Activated T-helper 1 cell treated with anti-CD3 and anti-CD28 coated beads, Interleukin-12 subunit alpha, Interleukin-12 subunit beta, Interleukin-2, Interleukin-4 antibody, amounts not matched to agents 30 ng/mL and 10 ng/mL and 1 ng/mL, durations not matched to agents 14 hours and 24 hours and 36 hours (primary cell): ENCODE measurements at regions of chr17 and their contacts with region 1.

Region 1: GRCh38 chr17:27236717-27237315 is 57.1 kb upstream of the WSB1 start:
- DNase-seq: peak; percentile 51
- H3K4me3 Mint-ChIP-seq: no peak overlapping the region
- H3K27ac Mint-ChIP-seq: no peak overlapping the region
- H3K4me1 Mint-ChIP-seq: peaks cover 21% of the 10 kb centered on the region
- H3K27me3 Mint-ChIP-seq: peaks cover 22% of the 10 kb centered on the region

Region 2: DNA sequence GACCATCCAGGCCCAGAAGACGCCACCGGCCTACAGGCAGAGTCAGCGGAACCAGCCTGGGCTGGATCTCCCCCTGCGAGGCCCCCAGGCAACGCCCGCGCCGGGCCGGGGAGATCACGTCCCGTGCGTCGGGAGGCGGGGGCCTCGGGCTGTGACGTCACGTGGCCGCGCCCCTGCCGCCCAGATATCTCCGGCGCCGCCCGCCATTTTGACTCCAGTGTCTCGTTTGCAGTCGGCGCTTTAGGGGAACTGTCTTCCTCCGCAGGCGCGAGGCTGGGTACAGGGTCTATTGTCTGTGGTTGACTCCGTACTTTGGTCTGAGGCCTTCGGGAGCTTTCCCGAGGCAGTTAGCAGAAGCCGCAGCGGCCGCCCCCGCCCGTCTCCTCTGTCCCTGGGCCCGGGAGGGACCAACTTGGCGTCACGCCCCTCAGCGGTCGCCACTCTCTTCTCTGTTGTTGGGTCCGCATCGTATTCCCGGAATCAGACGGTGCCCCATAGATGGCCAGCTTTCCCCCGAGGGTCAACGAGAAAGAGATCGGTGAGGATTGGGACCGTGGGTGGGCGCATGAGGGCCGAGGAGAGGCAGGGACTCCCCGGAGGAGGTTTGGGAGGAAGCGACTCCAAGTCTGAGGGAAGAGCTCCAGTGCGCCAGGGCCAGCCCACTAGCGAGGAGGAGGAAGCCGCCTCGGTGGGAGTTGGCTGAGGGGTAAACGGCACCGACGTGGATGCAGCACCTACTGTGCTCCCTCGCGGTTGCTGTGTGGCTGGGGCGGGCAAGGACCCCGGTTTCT is 57.3 kb after region 1 on chr17 and contains the start of gene WSB1:
- intact Hi-C with region 1: loop called (anchors 1 kb)
- DNase-seq: peak; percentile 89
- H3K4me3 Mint-ChIP-seq: peak within 1 kb of the TSS; percentile 97
- H3K27ac Mint-ChIP-seq: peak within 1 kb of the TSS; percentile 98
- H3K4me1 Mint-ChIP-seq: peaks cover 37% of the 10 kb centered on the region
- H3K27me3 Mint-ChIP-seq: no peaks in the 10 kb centered on the region
- total RNA-seq, gene WSB1: 90.3 and 102 TPM in 2 replicates

Region 3: GRCh38 chr17:27353461-27354050 is 116.7 kb after region 1 on chr17:
- intact Hi-C with region 1: loop called (anchors 1 kb)
- DNase-seq: peak; percentile 86
- H3K4me3 Mint-ChIP-seq: peak overlapping the region; percentile 82
- H3K27ac Mint-ChIP-seq: peak overlapping the region; percentile 95
- H3K4me1 Mint-ChIP-seq: peaks cover 45% of the 10 kb centered on the region
- H3K27me3 Mint-ChIP-seq: no peaks in the 10 kb centered on the region

Region 4: DNA sequence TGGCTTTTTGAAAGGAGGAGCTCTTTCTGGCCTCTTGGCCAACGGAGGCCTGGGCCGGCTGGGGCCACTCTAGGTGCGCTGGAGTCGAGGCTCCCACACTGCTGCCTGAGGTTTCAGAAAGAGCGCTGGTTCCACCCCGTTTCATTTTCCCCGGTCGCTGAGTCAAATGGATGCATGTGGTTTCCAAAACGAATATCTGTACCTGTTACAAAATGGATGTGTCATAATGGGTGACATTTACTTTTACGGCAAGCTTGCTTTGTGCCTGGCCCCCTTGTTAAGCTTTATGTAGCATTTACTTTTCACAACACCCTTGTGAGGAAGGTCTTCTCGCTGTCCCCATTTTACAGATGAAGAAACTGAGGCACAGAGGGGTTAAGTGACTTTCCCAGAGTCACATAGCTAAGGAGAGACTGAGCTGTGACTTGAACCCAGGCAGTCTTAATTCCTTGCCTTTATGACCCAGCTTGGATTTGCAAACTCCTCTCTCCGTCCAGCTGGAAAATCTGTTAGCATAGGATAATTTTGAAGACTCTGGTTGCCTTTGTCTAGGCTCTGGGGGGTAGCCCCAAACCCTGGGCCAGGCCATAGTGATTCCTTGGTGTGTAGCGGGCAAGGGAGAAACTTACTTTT is 230.0 kb after region 1 on chr17:
- intact Hi-C with region 1: loop called (anchors 2 kb)
- DNase-seq: peak; percentile 74
- H3K4me3 Mint-ChIP-seq: peak overlapping the region; percentile 79
- H3K27ac Mint-ChIP-seq: peak overlapping the region; percentile 97
- H3K4me1 Mint-ChIP-seq: peaks cover 88% of the 10 kb centered on the region
- H3K27me3 Mint-ChIP-seq: no peaks in the 10 kb centered on the region

Region 5: GRCh38 chr17:27760069-27760885 is 523.5 kb after region 1 on chr17:
- intact Hi-C with region 1: loop called (anchors 2 kb)
- DNase-seq: peak; percentile 48
- H3K4me3 Mint-ChIP-seq: no peak overlapping the region
- H3K27ac Mint-ChIP-seq: no peak overlapping the region
- H3K4me1 Mint-ChIP-seq: no peaks in the 10 kb centered on the region
- H3K27me3 Mint-ChIP-seq: no peaks in the 10 kb centered on the region